Psoas muscle (tissue), 8 donors: ENCODE measurements at regions of chr12 and their contacts with region 1.

Region 1: GRCh38 chr12:77796775-77797174 is 33.9 kb upstream of the NAV3 start:
- DNase-seq: no peak
- ATAC-seq: no peak
- H3K4me3 ChIP-seq: no peak overlapping the region
- H3K27ac ChIP-seq: no peak overlapping the region
- H3K4me1 ChIP-seq: no peaks in the 10 kb centered on the region
- H3K27me3 ChIP-seq: no peaks in the 10 kb centered on the region
- CTCF ChIP-seq: no peak

Region 2: GRCh38 chr12:77830583-77831351 is 34.0 kb after region 1 on chr12 and contains the start of gene NAV3:
- intact Hi-C with region 1: loop called in 1 of 2 experiments (anchors 1 kb)
- DNase-seq: no peak
- ATAC-seq: peak in 1 of 4 donors; percentile 53
- H3K4me3 ChIP-seq: peak within 1 kb of the TSS; percentile 8
- H3K27ac ChIP-seq: no peak within 1 kb of the TSS
- H3K4me1 ChIP-seq: no peaks in the 10 kb centered on the region
- H3K27me3 ChIP-seq: no peaks in the 10 kb centered on the region
- CTCF ChIP-seq: no peak
- total RNA-seq, gene NAV3: 2.2 to 4.2 (median 3.4) TPM